Endothelial cell of umbilical vein (primary cell): ENCODE measurements at regions of chr5 and their contacts with region 1.

Region 1: DNA sequence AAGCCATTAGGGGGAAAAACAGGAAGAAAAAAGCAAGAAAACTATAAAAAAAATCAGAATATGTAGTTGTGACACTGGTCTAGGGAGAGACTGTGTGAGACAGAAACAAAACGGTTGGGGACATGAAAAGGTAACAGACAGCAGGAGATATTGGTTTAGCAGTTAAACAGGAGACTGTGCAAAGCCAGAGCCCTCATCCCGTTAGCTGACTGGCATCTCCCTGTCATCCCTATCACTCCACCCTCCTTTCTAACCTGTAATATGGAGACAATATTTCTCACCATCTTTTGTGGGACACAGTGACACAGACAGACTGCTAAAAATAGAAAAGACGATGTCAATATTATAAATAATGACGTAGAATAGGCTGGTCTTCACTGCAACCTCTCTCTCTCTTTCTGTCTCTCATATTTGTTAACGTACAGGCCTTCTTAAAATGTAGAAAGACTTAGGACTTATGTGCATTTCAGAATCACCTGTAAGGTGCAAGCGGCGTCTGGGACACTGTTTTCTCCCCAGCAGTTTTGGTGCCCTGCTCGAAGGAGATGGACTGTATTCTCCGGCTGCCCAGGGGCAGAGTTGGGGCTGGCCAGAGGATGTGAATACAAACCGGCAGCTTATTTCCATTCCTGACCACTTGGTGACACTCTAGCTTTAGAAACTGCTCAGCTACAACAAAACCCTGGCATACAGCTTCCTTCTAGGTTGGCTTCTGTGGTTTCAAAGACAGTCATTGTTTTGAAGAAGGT is 190.6 kb downstream of the MAT2B start:
- DNase-seq: peak; percentile 87
- H3K4me3 ChIP-seq: no peak overlapping the region
- H3K27ac ChIP-seq: peak overlapping the region; percentile 24
- H3K4me1 ChIP-seq: peaks cover 7% of the 10 kb centered on the region
- H3K27me3 ChIP-seq: no peaks in the 10 kb centered on the region
- CTCF ChIP-seq: peak; percentile 76 to 78
- POLR2A ChIP-seq: no peak

Region 2: GRCh38 chr5:163706053-163706771 is 10.2 kb after region 1 on chr5:
- CTCF ChIA-PET with region 1: interaction called, 19 read pairs
- POLR2A ChIA-PET with region 1: no interaction called
- dilution Hi-C with region 1: no loop called
- intact Hi-C with region 1: no loop called
- DNase-seq: peak; percentile 83
- H3K4me3 ChIP-seq: no peak overlapping the region
- H3K27ac ChIP-seq: peak overlapping the region; percentile 96
- H3K4me1 ChIP-seq: peaks cover 34% of the 10 kb centered on the region
- H3K27me3 ChIP-seq: no peaks in the 10 kb centered on the region
- CTCF ChIP-seq: no peak
- POLR2A ChIP-seq: no peak

Region 3: DNA sequence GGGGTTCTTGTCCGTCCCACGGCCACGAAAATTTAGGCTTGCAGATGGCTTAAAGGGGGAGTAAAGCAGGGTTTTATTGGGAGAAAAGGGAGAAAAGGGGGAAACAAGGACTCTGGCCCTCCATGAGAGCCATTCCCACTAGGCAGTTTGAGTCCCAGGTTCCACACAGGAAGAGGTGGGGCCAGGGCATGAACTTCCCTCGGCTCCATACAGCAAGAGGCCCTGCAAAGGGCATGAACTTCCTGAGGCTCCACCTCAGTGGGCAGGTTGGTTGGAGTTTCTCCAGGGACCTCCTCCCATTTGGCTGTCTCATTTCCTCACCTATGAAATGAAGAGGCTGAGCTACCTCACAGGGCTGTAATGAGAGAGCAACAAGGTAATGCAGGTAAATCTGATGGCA is 39.1 kb after region 1 on chr5:
- CTCF ChIA-PET with region 1: no interaction called
- POLR2A ChIA-PET with region 1: no interaction called
- dilution Hi-C with region 1: no loop called
- intact Hi-C with region 1: no loop called
- DNase-seq: no peak
- H3K4me3 ChIP-seq: no peak overlapping the region
- H3K27ac ChIP-seq: no peak overlapping the region
- H3K4me1 ChIP-seq: no peaks in the 10 kb centered on the region
- H3K27me3 ChIP-seq: no peaks in the 10 kb centered on the region
- CTCF ChIP-seq: no peak
- POLR2A ChIP-seq: no peak

Region 4: DNA sequence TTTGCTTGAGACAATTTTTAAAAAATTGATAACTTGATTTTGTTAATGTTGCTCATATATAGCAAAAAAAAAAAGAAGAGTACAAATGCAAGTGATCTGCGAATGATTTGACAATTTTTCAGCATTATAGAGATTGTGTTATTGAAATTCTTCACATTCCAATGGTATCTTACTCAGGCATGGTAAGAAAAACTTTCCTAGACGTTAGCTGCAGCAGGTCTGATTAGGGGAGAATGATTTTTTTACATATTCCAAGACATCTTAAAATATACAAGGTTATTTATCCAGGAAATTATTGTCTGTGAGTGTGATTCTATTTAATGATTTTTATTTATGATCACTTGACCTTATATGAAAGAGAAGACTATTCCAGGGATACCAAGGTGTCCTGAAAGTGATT is 171.3 kb after region 1 on chr5:
- CTCF ChIA-PET with region 1: interaction called, 5 read pairs
- POLR2A ChIA-PET with region 1: interaction called, 4 read pairs
- dilution Hi-C with region 1: loop called (anchors 10 kb)
- intact Hi-C with region 1: loop called (anchors 2 kb)
- DNase-seq: peak; percentile 76
- H3K4me3 ChIP-seq: no peak overlapping the region
- H3K27ac ChIP-seq: peak overlapping the region; percentile 99
- H3K4me1 ChIP-seq: peaks cover 55% of the 10 kb centered on the region
- H3K27me3 ChIP-seq: no peaks in the 10 kb centered on the region
- CTCF ChIP-seq: no peak
- POLR2A ChIP-seq: peak; percentile 26

Region 5: DNA sequence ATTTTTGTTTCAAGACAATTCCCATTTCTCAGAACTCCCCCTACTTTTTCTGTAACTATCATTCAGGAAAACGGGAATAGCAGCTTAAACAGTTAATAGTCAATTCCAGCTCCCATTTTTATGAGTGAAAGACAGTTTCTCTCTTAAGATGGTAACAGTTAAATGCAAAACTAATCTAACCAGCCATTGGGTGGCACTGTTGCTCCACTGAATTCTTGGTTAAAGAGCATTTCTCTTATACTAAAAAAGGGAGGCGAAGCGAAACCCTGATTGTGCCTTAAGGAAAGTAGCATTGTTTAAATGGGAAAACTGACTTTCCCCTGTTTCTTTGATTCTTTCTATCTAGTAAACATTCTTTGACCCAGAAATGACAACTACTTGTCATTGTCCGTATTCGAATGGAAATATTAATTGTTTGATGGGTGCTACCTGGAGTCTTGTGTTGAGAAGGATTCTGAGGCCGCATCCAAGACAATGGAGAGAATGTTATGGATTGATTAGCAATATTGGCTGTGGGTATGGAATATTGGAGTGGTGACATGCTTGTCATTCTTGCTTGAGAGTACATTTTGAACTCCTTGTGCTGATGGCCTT is 317.2 kb after region 1 on chr5:
- CTCF ChIA-PET with region 1: interaction called, 131 read pairs
- POLR2A ChIA-PET with region 1: no interaction called
- dilution Hi-C with region 1: no loop called
- intact Hi-C with region 1: loop called (anchors 1 kb)
- DNase-seq: peak; percentile 88
- H3K4me3 ChIP-seq: no peak overlapping the region
- H3K27ac ChIP-seq: peak overlapping the region; percentile 47
- H3K4me1 ChIP-seq: peaks cover 11% of the 10 kb centered on the region
- H3K27me3 ChIP-seq: no peaks in the 10 kb centered on the region
- CTCF ChIP-seq: peak; percentile 45 to 59
- POLR2A ChIP-seq: no peak

Region 6: DNA sequence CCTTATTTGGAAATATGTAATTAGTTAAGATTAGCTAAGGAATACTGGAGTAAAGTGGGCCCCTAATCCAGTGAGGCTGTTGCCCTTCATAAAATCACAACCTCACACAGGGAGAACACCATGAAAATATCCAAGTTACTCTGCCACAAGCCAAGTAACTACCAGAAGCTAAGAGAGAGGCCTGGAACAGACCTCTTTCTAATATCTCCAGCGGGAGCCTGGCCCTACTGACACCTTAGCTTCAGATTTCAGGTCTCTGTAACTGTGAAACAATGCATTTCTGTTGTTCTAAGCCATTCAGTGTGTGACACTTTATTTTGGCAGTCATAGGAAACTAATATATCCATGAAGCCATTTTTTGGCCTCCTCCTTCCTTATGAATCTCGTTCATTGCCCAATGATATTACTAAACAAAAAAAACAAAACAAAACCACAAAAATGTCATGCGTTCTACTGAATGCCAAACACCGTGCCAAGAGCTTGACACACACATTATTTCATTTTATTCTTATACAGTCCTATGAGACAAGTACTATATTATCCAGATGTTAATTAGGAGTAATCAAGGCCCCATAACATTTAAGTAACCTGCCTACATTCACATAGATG is 508.4 kb after region 1 on chr5:
- CTCF ChIA-PET with region 1: no interaction called
- POLR2A ChIA-PET with region 1: no interaction called
- dilution Hi-C with region 1: no loop called
- intact Hi-C with region 1: loop called (anchors 5 kb)
- DNase-seq: peak; percentile 50
- H3K4me3 ChIP-seq: no peak overlapping the region
- H3K27ac ChIP-seq: peak overlapping the region; percentile 87
- H3K4me1 ChIP-seq: peaks cover 28% of the 10 kb centered on the region
- H3K27me3 ChIP-seq: no peaks in the 10 kb centered on the region
- CTCF ChIP-seq: no peak
- POLR2A ChIP-seq: no peak

Region 7: DNA sequence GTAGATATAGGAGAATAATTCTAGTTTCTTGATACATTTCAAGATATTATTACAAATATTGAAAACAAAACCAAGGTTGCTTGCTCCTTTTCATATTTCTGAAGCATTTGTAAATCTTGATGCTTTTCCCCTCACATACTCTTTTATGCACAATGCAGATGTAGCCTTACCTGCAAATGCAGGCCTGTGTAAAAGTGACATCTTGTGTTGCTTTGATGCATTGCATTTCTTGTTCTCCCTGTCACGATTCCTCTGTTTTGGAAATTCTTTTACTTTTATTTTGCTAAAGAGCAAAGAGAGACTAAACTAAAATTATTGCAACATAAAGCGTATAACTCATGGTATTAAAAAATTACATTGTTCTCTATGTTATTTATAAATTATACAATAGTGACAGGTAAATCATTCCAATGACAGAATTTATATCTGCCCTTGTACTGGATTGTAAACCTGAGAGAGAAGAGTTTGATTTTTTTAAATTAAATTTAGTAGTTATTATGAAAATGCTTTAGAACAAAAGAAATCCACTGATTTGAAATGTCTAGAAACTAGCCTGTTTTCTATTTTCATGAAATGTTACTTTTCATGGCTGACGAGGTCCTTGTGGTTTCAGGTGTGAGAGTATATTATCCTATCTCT is 779.5 kb after region 1 on chr5:
- CTCF ChIA-PET with region 1: interaction called, 37 read pairs
- POLR2A ChIA-PET with region 1: no interaction called
- dilution Hi-C with region 1: no loop called
- intact Hi-C with region 1: loop called (anchors 1 kb)
- DNase-seq: peak; percentile 47
- H3K4me3 ChIP-seq: no peak overlapping the region
- H3K27ac ChIP-seq: no peak overlapping the region
- H3K4me1 ChIP-seq: no peaks in the 10 kb centered on the region
- H3K27me3 ChIP-seq: no peaks in the 10 kb centered on the region
- CTCF ChIP-seq: peak in 1 of 2 donors; percentile 45
- POLR2A ChIP-seq: no peak

Region 8: DNA sequence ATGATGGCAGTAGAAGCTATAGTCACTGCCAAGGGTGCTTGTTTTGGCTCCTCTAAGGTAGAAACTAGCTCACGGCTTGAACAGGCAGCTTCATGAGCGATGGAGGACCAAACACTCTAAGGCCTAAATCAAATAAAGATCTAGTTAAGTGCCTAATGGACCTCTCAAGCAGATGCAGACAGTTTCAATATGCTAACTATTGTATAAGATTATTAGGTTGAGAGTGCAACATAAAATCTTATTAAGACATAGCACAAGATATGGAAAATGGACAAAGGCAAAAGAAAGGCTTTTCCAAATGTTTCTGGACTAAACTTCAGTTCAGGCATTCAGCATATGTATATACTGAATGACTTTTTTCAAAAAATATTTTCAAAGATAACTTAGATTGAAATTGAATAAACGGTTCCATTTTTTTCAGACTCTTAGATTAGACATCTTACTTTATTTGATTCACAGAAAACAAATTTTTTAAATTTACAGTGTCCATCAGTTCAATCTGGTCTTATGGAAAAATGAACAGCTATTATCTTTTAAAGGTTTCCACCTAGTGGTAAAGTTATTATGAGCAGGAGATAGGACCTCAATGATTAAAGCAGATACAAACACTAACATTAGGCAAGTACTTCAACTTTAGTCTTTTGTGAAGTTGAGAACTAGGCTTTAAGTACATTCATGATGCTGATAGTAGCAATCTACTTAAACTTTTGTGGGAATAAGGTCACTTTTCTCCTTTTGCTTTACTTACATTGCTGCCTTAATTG is 977.1 kb after region 1 on chr5:
- CTCF ChIA-PET with region 1: no interaction called
- POLR2A ChIA-PET with region 1: no interaction called
- dilution Hi-C with region 1: no loop called
- intact Hi-C with region 1: loop called (anchors 1 kb)
- DNase-seq: no peak
- H3K4me3 ChIP-seq: no peak overlapping the region
- H3K27ac ChIP-seq: no peak overlapping the region
- H3K4me1 ChIP-seq: no peaks in the 10 kb centered on the region
- H3K27me3 ChIP-seq: no peaks in the 10 kb centered on the region
- CTCF ChIP-seq: no peak
- POLR2A ChIP-seq: no peak